ENCODE measurements at regions of chr7 and their contacts with region 1.

Region 1: GRCh38 chr7:156091519-156092080 is 279.3 kb upstream of the SHH start:
- DNase-seq: no peak

Region 2: DNA sequence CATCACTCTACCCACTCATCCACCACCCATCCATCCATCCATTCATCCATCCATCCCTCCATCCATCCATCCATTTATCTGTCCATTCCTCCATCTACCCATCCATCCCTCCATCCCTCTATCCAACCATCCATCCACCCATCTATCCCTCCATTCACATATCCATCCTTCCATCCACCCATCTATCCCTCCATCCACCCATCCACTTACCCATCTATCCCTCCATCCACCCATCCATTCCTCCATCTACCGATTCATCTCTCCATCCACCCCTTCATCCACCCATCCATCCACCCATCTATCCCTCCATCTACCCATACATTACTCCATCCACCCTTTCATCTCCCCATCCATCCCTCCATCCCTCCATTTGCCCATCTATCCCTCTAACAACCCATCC is 39.7 kb before region 1 on chr7:
- intact Hi-C with region 1: loop called in 1 of 2 experiments (anchors 2 kb)
- DNase-seq: no peak

Measured in posterior vena cava (tissue), 2 donors.